Heart right ventricle (tissue), 16 donors: ENCODE measurements at regions of chr7 and their contacts with region 1.

Region 1: DNA sequence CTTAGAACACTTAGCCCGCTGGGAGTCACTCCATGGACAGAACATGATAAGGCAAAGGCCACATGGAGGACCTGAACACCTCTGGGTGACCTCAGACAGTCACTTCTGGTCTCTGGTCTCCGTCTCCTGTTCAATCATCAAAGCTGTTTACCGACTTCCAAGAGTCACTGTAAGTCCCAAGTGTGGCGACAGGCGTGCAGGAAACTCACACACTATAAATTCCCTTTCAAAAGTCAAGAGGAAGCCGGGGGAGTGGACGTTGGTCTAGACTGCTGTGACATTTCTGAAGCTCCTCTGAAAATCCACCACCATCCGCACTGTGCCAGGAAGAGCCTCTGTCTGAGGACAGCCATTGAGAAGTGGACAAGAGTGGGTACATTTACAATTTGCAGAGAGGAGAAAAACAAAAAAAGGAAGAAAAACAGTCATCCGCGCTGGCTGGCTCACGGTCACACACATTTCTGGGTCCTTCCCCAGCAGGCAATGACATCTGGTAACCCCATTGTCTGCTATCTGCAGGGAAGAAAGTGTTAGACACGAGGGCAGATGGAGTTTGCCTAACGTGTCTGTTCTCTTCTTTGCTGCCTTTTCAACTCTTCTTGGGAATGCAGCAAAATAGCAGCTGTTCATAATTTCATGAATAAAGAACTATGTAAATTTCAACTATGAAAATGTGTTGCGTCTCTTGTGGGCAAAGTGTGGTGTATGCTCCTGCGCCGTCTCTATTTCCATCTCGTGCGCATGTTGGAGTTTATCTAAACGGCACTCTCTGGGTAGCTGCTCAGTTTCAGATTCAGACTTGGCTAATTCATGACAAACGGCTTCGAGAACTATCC is 32.9 kb upstream of the CUX1 start:
- DNase-seq: peak in 1 of 2 donors; percentile 11
- ATAC-seq: peak in 7 of 8 donors; percentile 33 to 86 (median 59)
- H3K4me3 ChIP-seq: peak overlapping the region in 1 of 10 donors; percentile 30
- H3K27ac ChIP-seq: peak overlapping the region in 1 of 10 donors; percentile 29
- H3K4me1 ChIP-seq: peaks cover 0 to 22% (median 16%) of the 10 kb centered on the region in 9 donors
- H3K27me3 ChIP-seq: no peaks in the 10 kb centered on the region
- CTCF ChIP-seq: no peak

Region 2: DNA sequence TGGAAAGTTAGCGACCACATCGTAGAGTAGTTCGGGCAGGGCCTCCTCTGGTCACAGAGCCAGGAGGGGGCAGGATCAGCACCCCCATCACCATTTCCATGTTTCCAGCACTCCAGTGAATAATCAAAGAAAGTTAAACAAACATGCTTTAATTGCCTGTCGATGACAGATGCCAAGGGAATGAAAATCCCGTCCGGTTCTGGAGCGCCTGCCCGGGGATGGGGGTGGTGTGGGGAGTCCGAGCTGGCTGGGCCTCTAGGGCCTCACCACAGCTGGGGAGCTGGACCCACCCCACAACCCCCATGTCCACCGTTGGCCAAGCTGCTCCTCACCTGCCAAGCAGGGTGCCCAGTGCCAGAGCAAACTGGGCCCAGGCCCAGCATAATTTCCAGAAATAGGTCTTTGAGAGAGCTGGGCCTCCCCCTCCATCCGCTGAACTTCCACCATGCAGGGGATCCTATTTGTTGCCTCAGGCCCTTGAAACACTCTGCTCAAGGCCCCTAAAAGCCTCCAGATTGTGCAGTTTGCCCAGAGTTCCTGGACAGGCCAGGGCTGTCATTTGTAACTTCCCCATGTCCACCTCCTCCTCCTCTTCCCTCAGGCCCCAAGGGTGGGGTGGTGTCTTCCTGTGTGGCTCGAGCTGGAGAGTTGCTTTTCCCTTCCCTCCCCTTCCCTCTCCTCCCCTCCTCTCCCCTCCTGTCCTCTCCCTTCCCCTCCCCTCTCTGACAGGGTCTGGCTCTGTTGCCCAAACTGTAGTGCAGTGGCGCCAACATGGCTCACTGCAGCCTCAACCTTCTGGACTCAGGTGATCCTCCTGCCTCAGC is 256.5 kb before region 1 on chr7:
- intact Hi-C with region 1: no loop called
- DNase-seq: peak; percentile 21 to 35
- ATAC-seq: peak; percentile 50 to 86 (median 68)
- H3K4me3 ChIP-seq: no peak overlapping the region
- H3K27ac ChIP-seq: peak overlapping the region in 2 of 10 donors; percentile 21 to 22
- H3K4me1 ChIP-seq: peaks cover 0 to 4% (median 0%) of the 10 kb centered on the region in 9 donors
- H3K27me3 ChIP-seq: peaks cover 0 to 7% (median 0%) of the 10 kb centered on the region in 7 donors
- CTCF ChIP-seq: no peak

Region 3: GRCh38 chr7:101558742-101559325 is 225.7 kb before region 1 on chr7:
- intact Hi-C with region 1: loop called in 1 of 10 experiments (anchors 5 kb)
- DNase-seq: no peak
- ATAC-seq: no peak
- H3K4me3 ChIP-seq: no peak overlapping the region
- H3K27ac ChIP-seq: no peak overlapping the region
- H3K4me1 ChIP-seq: peaks cover 0 to 8% (median 0%) of the 10 kb centered on the region in 9 donors
- H3K27me3 ChIP-seq: peaks cover 0 to 29% (median 5%) of the 10 kb centered on the region in 7 donors
- CTCF ChIP-seq: no peak

Region 4: GRCh38 chr7:102306875-102307677 is 522.6 kb after region 1 on chr7:
- intact Hi-C with region 1: no loop called
- DNase-seq: peak; percentile 33 to 43
- ATAC-seq: peak in 6 of 8 donors; percentile 35 to 64 (median 52)
- H3K4me3 ChIP-seq: peak overlapping the region in 1 of 10 donors; percentile 23
- H3K27ac ChIP-seq: peak overlapping the region in 1 of 10 donors; percentile 64
- H3K4me1 ChIP-seq: peaks cover 0 to 45% (median 4%) of the 10 kb centered on the region in 9 donors
- H3K27me3 ChIP-seq: no peaks in the 10 kb centered on the region
- CTCF ChIP-seq: no peak

Region 5: GRCh38 chr7:102321351-102322177 is 537.1 kb after region 1 on chr7:
- intact Hi-C with region 1: loop called in 1 of 10 experiments (anchors 5 kb)
- DNase-seq: peak in 1 of 2 donors; percentile 30
- ATAC-seq: peak in 6 of 8 donors; percentile 10 to 70 (median 46)
- H3K4me3 ChIP-seq: peak overlapping the region in 3 of 10 donors; percentile 8 to 33 (median 9)
- H3K27ac ChIP-seq: no peak overlapping the region
- H3K4me1 ChIP-seq: peaks cover 0 to 25% (median 9%) of the 10 kb centered on the region in 9 donors
- H3K27me3 ChIP-seq: peaks cover 0 to 24% (median 8%) of the 10 kb centered on the region in 7 donors
- CTCF ChIP-seq: peak in 1 of 9 donors; percentile 8